ENCODE measurements at regions of chr19 and their contacts with region 1.

Region 1: GRCh38 chr19:50147462-50148423 is 15.3 kb downstream of the IZUMO2 start:
- DNase-seq: peak; percentile 91 to 95
- ATAC-seq: peak; percentile 98
- H3K4me3 ChIP-seq: peak overlapping the region; percentile 7 to 48
- H3K27ac ChIP-seq: peak overlapping the region in 1 of 2 donors; percentile 11
- H3K4me1 ChIP-seq: no peaks in the 10 kb centered on the region
- H3K27me3 ChIP-seq: no peaks in the 10 kb centered on the region

Region 2: GRCh38 chr19:50329146-50329925 is 181.6 kb after region 1 on chr19 and contains the start of gene KCNC3:
- intact Hi-C with region 1: loop called in 1 of 2 experiments (anchors 10 kb)
- DNase-seq: peak; percentile 99 to 100
- ATAC-seq: peak; percentile 91
- H3K4me3 ChIP-seq: peak within 1 kb of the TSS in 1 of 2 donors; percentile 30
- H3K27ac ChIP-seq: no peak within 1 kb of the TSS
- H3K4me1 ChIP-seq: no peaks in the 10 kb centered on the region
- H3K27me3 ChIP-seq: no peaks in the 10 kb centered on the region
- total RNA-seq, gene KCNC3: 1.6 to 3.2 TPM

Measured in aorta (tissue), 5 donors.